ENCODE measurements at regions of chr19 and their contacts with region 1.

Region 1: GRCh38 chr19:29665215-29665825 is at the start of gene PLEKHF1:
- DNase-seq: peak in 1 of 2 donors; percentile 91
- H3K4me3 ChIP-seq: peak within 1 kb of the TSS; percentile 87 to 96
- H3K27ac ChIP-seq: peak within 1 kb of the TSS; percentile 97
- H3K4me1 ChIP-seq: peaks cover 75% of the 10 kb centered on the region
- H3K27me3 ChIP-seq: no peaks in the 10 kb centered on the region
- CTCF ChIP-seq: no peak
- POLR2A ChIP-seq: peak in 1 of 2 donors; percentile 87
- total RNA-seq, gene PLEKHF1: 37.1 TPM

Region 2: DNA sequence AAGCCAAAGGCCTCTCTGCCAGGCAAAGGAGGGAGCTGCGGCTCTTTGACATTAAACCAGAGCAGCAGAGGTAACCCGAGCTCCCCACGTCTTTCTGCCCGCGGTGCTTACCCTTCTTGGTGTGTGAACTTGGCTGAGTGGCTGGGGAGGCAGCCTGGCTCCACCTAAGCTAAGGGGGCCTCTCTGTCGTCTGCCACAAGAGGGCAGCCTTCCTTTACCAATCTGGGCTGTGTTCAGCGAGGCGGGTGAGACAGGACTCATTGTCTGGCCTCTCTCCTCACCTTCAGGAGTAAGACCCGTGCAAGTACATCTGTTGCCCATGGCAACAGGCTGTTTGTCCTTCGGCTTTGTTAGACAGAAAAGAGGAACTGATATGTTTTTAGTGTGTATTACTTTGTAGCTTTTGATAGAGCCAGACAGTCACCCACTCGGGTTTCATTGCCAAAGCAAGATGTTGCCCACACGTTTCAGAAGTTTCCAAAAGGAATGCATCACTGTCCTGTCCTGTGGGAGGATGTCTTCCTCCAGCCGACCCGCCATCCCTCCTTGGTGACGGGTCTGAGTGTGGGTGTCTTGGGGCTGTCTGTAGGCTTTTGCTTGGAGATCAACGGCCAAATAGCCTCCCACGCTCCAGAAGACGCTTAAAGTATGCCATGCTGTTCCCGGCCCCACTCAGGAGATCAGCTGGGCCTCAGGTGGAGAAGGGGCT is 54.6 kb before region 1 on chr19:
- intact Hi-C with region 1: loop called (anchors 5 kb)
- DNase-seq: no peak
- H3K4me3 ChIP-seq: no peak overlapping the region
- H3K27ac ChIP-seq: no peak overlapping the region
- H3K4me1 ChIP-seq: peaks cover 13% of the 10 kb centered on the region
- H3K27me3 ChIP-seq: no peaks in the 10 kb centered on the region
- CTCF ChIP-seq: peak; percentile 60 to 87 (median 82)
- POLR2A ChIP-seq: no peak

Region 3: GRCh38 chr19:29630665-29631064 is 34.7 kb before region 1 on chr19:
- intact Hi-C with region 1: no loop called
- DNase-seq: no peak
- H3K4me3 ChIP-seq: no peak overlapping the region
- H3K27ac ChIP-seq: no peak overlapping the region
- H3K4me1 ChIP-seq: no peaks in the 10 kb centered on the region
- H3K27me3 ChIP-seq: no peaks in the 10 kb centered on the region
- CTCF ChIP-seq: no peak
- POLR2A ChIP-seq: no peak

Region 4: DNA sequence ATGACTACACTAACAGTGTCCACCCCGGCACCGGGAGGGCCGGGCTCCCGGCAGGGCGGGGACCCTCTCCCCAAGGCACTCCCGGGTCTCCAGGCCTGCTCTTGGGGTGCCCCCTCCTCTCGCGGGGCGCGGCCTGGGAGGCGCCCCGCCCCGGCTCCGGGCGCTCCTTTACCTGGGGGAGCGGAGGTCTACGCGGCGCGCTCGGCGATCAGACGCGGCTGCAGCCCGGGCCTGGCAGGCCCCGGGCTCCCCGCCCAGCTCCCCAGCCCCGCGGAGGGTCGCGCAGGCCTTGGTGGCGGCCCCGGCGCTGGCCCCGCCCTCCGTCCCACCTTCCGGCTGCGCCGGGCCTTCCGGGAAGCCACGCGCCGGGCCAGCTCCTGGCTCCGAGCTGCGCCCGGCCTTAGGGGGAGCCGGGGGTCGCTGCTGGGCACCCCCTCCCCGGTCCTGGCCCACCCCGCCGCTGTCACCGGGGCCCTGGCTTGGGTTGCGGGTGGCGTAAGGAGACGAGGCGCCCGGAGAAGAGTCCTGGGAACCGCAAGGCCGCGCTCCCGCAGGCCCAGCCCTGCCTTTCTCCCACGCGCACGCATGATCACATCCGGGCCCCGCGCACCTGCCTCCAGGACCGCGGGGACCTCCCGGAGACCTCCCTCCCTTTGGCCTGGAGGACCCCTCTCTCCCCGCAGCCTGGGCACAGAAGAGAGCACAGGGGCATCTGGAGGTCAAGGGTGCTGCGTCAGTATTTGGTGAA is 49.8 kb after region 1 on chr19 and contains the start of gene C19orf12:
- intact Hi-C with region 1: loop called (anchors 10 kb)
- DNase-seq: no peak
- H3K4me3 ChIP-seq: peak within 1 kb of the TSS; percentile 81 to 92
- H3K27ac ChIP-seq: peak within 1 kb of the TSS; percentile 90
- H3K4me1 ChIP-seq: peaks cover 33% of the 10 kb centered on the region
- H3K27me3 ChIP-seq: no peaks in the 10 kb centered on the region
- CTCF ChIP-seq: no peak
- POLR2A ChIP-seq: peak in 1 of 2 donors; percentile 69
- total RNA-seq, gene C19orf12: 14.2 TPM

Measured in vagina (tissue), 2 donors.